Activated CD8-positive, alpha-beta memory T cell treated with anti-CD3 and anti-CD28 coated beads, Interleukin-2, amount 10 ng/mL, durations not matched to agents 7 days and 5 days (primary cell): ENCODE measurements at regions of chr2 and their contacts with region 1.

Region 1: DNA sequence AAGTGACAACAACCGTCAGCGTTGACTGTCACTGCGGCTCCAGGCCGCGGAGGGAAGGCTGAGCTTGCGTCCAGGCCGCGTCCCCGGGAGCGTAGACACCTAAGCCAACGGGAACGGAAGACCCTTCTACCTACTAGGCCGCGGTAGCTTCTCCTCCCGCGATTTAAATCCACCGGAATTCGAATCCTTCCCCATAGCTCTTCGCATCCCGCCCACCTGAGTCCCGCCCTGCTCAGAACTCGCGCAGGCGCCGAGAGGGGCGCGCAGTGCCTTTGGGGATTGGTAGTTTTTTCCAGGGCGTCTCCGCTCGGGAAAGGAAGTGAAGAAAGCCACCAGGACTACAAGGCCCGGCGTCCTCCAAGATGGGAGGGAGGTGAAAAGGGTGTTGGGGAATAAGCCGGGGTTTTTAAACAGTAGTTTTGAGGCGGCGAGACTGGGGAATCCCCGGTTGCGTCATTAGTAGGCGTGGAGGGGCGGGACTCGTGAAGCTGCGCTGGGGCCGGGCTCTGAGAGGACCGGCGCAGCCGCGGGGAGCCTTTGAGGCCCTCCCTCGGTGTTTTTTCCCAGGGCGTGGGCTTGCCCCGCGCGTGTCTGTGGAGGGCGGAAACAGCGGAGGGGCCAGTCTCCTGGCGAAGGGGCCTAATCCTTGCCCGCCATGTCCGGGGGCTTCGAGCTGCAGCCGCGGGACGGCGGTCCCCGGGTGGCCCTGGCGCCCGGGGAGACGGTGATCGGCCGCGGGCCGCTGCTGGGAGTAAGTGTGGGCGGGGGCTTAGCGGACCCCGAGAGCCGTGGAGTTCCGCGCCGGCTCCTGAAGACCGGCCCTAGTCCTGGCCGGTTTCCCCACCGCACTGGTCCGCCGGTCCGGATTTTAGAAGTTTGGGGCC is at the starts of genes APLF and FBXO48:
- DNase-seq: peak; percentile 99
- ATAC-seq: peak; percentile 90
- H3K4me3 Mint-ChIP-seq: peak within 1 kb of the TSS; percentile 100
- H3K27ac Mint-ChIP-seq: peak within 1 kb of the TSS; percentile 93
- H3K4me1 Mint-ChIP-seq: peaks cover 39% of the 10 kb centered on the region
- H3K27me3 Mint-ChIP-seq: no peaks in the 10 kb centered on the region
- total RNA-seq, gene APLF: 3.0 to 3.3 TPM
- total RNA-seq, gene FBXO48: 3.3 to 3.4 TPM

Region 2: DNA sequence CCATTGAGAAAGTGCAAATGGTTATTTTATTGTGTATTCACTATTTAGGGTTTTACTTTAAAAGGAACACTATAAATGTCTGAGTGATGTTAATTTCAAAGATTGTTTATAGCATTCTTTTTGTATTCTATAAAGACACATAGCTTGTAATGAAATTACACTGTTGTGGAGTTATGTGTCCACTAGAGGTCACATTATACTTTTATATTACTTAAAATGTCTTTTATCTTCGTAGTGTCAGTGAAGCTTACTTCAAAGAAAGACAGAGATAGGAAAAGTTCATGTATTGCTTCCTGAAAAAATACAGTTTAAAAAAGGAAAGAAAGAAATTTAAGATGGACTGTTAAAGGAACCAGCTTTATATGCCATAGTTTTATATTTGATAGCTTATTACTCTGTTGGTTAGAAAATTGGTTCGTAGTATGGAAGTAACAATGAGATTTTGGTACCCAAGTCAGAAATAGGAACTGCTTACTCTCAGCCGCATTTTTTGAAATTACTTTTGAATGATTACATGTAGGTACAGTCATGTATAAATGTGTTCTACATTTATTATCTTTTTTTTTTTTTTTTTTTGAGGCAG is 20.5 kb after region 1 on chr2:
- CTCF ChIA-PET with region 1: interaction called, 23 read pairs
- DNase-seq: no peak
- ATAC-seq: no peak
- H3K4me3 Mint-ChIP-seq: no peak overlapping the region
- H3K27ac Mint-ChIP-seq: no peak overlapping the region
- H3K4me1 Mint-ChIP-seq: peaks cover 3% of the 10 kb centered on the region
- H3K27me3 Mint-ChIP-seq: no peaks in the 10 kb centered on the region

Region 3: DNA sequence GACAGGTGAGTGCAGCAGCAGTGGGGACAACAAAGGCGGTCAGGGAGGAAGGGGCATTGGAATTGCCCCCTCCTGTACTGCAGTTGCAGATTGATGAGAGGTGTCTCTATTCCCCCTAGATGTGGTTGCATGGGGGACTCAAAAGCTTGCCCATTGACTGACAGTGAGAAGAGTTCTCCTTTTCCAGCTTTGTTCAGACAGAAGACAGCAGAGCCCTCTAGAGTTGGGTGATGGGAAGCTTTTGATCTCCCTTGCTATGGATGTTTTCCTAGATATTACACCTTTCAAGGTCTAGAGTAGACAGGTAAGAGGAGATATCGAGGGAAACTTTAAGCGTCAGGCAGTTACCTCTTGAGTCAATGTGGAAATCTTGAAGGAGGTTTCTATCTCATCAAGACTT is 179.0 kb after region 1 on chr2:
- CTCF ChIA-PET with region 1: interaction called, 15 read pairs
- DNase-seq: no peak
- ATAC-seq: no peak
- H3K4me3 Mint-ChIP-seq: no peak overlapping the region
- H3K27ac Mint-ChIP-seq: no peak overlapping the region
- H3K4me1 Mint-ChIP-seq: peaks cover 14% of the 10 kb centered on the region
- H3K27me3 Mint-ChIP-seq: peaks cover 81% of the 10 kb centered on the region

Region 4: GRCh38 chr2:68721482-68722101 is 254.3 kb after region 1 on chr2:
- CTCF ChIA-PET with region 1: interaction called, 13 read pairs
- DNase-seq: peak; percentile 71
- ATAC-seq: peak; percentile 52
- H3K4me3 Mint-ChIP-seq: peak overlapping the region; percentile 46
- H3K27ac Mint-ChIP-seq: peak overlapping the region; percentile 87
- H3K4me1 Mint-ChIP-seq: peaks cover 97% of the 10 kb centered on the region
- H3K27me3 Mint-ChIP-seq: no peaks in the 10 kb centered on the region

Region 5: DNA sequence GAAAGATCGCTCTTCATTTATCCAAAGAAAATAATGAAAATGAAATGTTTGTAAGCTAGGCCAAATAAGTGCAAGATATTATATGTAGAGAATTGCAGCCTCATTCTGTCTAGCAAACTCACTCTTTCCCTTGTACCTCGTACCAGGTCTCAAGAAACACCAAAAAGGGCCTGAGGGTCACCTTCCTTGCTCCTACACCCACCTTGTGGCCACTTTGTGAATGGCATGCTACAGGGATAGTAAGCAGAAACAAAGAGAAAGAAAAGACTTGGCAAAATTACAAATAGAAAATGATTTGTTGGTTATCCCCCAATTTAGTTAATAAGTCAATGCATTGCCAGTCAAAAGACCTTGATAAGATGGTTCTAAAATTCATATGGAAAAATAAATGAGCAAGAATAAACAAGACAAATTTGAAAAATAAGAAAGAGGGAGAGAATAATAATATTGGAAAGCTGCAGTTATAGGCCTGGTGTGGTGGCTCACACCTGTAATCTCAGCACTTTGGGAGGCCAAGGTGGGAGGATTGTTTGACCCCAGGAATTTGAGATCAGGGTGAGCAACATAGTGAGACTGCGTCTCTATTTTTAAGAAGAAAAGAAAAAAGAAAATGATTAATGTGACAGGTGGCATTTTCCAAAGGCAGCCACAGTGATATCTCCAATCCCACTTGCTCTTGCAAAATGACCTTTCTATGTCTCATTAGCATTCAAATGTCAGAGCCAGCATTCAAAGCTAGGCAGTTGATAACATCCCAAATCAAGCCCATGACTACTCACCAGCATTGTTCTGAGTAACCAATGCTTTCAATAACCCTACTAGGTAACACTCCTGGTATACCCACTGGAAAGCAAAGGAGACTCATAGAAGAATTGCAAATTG is 442.7 kb after region 1 on chr2:
- CTCF ChIA-PET with region 1: interaction called, 33 read pairs
- DNase-seq: peak; percentile 89
- ATAC-seq: no peak
- H3K4me3 Mint-ChIP-seq: no peak overlapping the region
- H3K27ac Mint-ChIP-seq: peak overlapping the region; percentile 77
- H3K4me1 Mint-ChIP-seq: peaks cover 40% of the 10 kb centered on the region
- H3K27me3 Mint-ChIP-seq: no peaks in the 10 kb centered on the region